ENCODE measurements at regions of chr6 and their contacts with region 1.

Region 1: DNA sequence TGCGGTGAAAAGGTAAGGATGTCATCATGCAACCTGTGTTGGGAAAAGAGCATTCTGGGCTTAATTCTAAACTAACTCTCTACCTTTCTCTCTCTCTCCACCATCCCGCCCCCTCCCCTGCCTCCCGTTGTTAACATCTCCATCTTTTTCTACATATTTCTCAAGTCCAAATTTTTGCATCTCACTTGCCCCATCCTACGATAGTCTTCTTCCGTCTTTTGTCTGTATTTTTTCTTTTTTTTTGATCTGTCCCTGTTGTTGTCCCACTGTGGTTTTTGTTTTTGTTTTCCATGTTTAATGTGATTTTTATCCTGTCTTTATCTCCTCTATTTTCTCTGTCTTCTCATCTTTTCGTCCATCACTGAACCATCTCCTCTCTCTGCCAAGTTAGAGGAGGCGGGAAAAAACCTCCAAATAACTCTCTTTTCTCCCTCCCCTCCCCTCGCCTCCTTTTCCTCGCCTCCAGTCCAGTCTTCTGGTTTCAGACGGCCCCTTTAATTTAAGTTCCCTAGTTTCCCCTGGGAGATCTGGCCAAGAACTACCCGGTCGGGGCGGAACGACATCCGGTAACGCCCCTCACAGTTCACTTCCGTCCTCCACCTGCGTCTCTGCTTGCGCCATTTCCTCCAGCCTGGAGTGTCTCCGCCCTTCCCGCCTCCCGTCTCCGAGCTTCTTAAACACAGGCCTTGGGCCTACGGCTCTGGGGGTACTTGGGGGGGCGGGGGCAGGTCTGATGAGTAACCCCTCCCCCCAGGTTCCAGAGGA is at the start of gene NFKBIL1:
- DNase-seq: peak; percentile 96
- H3K4me3 Mint-ChIP-seq: peak within 1 kb of the TSS; percentile 88
- H3K27ac Mint-ChIP-seq: peak within 1 kb of the TSS; percentile 94
- H3K4me1 Mint-ChIP-seq: peaks cover 43% of the 10 kb centered on the region
- H3K27me3 Mint-ChIP-seq: no peaks in the 10 kb centered on the region
- total RNA-seq, gene NFKBIL1: 20.4 to 20.6 TPM

Region 2: GRCh38 chr6:31568537-31568961 is 21.4 kb after region 1 on chr6:
- CTCF ChIA-PET with region 1: interaction called, 442 read pairs
- intact Hi-C with region 1: loop called (anchors 1 kb)
- DNase-seq: peak; percentile 85
- H3K4me3 Mint-ChIP-seq: peak overlapping the region; percentile 34
- H3K27ac Mint-ChIP-seq: peak overlapping the region; percentile 83
- H3K4me1 Mint-ChIP-seq: peaks cover 76% of the 10 kb centered on the region
- H3K27me3 Mint-ChIP-seq: no peaks in the 10 kb centered on the region

Region 3: DNA sequence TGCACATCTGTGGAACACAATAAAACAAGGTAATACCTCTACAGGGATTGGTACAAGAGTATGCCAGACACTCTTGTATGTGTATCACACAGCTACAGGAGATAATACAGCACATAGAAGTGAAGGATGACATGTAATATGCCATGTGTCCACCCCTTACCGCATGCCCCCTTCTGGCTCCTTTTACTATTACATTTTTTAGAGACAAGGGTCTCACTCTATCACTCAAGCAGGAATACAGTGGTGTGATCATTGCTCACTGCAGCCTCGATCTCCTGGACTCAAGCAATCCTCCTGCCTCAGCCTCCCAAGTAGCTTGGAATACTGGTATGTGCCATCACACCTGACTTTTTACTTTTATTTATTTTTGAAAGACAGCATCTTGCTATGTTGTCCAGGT is 49.9 kb after region 1 on chr6:
- CTCF ChIA-PET with region 1: interaction called, 604 read pairs
- intact Hi-C with region 1: loop called (anchors 1 kb)
- DNase-seq: peak; percentile 56
- H3K4me3 Mint-ChIP-seq: no peak overlapping the region
- H3K27ac Mint-ChIP-seq: peak overlapping the region; percentile 77
- H3K4me1 Mint-ChIP-seq: peaks cover 43% of the 10 kb centered on the region
- H3K27me3 Mint-ChIP-seq: no peaks in the 10 kb centered on the region

Region 4: GRCh38 chr6:31652925-31653718 is 106.0 kb after region 1 on chr6:
- CTCF ChIA-PET with region 1: interaction called, 5 read pairs
- intact Hi-C with region 1: loop called (anchors 1 kb)
- DNase-seq: peak; percentile 92
- H3K4me3 Mint-ChIP-seq: peak overlapping the region; percentile 96
- H3K27ac Mint-ChIP-seq: peak overlapping the region; percentile 98
- H3K4me1 Mint-ChIP-seq: peaks cover 44% of the 10 kb centered on the region
- H3K27me3 Mint-ChIP-seq: no peaks in the 10 kb centered on the region

Region 5: GRCh38 chr6:31769684-31770371 is 222.7 kb after region 1 on chr6:
- CTCF ChIA-PET with region 1: no interaction called
- intact Hi-C with region 1: loop called (anchors 1 kb)
- DNase-seq: peak; percentile 86
- H3K4me3 Mint-ChIP-seq: no peak overlapping the region
- H3K27ac Mint-ChIP-seq: no peak overlapping the region
- H3K4me1 Mint-ChIP-seq: peaks cover 27% of the 10 kb centered on the region
- H3K27me3 Mint-ChIP-seq: no peaks in the 10 kb centered on the region